Dorsolateral prefrontal cortex (tissue), 120 donors: ENCODE measurements at regions of chr12 and their contacts with region 1.

Region 1: GRCh38 chr12:52121824-52122539 is 42.5 kb downstream of the SMIM41 start:
- DNase-seq: peak in 9 of 10 donors; percentile 22 to 75 (median 58)
- H3K4me3 ChIP-seq: no peak overlapping the region
- H3K27ac ChIP-seq: no peak overlapping the region
- H3K27me3 ChIP-seq: peaks cover 0 to 4% (median 0%) of the 10 kb centered on the region in 45 donors
- CTCF ChIP-seq: peak; percentile 35 to 83 (median 72)

Region 2: DNA sequence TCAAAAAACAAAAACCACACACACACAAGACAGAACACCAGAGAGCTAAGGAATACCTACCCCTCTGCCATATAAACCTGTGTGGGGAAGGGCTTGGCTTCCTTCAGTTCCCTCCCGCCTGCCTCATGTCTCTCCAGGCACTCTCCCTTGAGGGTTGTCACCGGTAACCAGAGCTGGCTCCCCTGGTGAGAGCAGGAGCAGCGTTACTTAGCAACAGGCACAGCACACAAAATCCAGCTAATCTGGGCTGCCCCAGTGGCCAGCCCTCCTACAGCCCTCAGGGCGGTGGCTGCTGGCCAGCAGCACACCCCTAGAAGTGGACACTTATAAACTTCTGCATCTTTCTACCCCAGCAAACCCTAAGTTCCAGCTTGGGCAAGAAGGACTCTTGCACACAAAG is 92.3 kb before region 1 on chr12:
- intact Hi-C with region 1: loop called (anchors 5 kb)
- DNase-seq: peak in 2 of 10 donors; percentile 50 to 63
- H3K4me3 ChIP-seq: no peak overlapping the region
- H3K27ac ChIP-seq: peak overlapping the region in 25 of 59 donors; percentile 4 to 67 (median 36)
- H3K27me3 ChIP-seq: no peaks in the 10 kb centered on the region
- CTCF ChIP-seq: no peak